ENCODE measurements at regions of chrX and their contacts with region 1.

Region 1: GRCh38 chrX:134423615-134424014 is 36.4 kb upstream of the HPRT1 start:
- DNase-seq: peak; percentile 49
- ATAC-seq: peak; percentile 29; the same call in 1 of the 2 replicates
- H3K4me3 ChIP-seq: no peak overlapping the region
- H3K27ac ChIP-seq: no peak overlapping the region
- H3K4me1 ChIP-seq: no peaks in the 10 kb centered on the region
- H3K27me3 ChIP-seq: no peaks in the 10 kb centered on the region
- CTCF ChIP-seq: peak; percentile 61

Region 2: GRCh38 chrX:134236626-134237614 is 186.7 kb before region 1 on chrX and contains the start of gene CCDC160:
- CTCF ChIA-PET with region 1: no interaction called
- POLR2A ChIA-PET with region 1: no interaction called
- intact Hi-C with region 1: no loop called
- DNase-seq: peak; percentile 51
- ATAC-seq: peak; percentile 72
- H3K4me3 ChIP-seq: peak within 1 kb of the TSS; percentile 74
- H3K27ac ChIP-seq: no peak within 1 kb of the TSS
- H3K4me1 ChIP-seq: peaks cover 26% of the 10 kb centered on the region
- H3K27me3 ChIP-seq: no peaks in the 10 kb centered on the region
- CTCF ChIP-seq: no peak
- total RNA-seq, gene CCDC160: 0.23 and 0.33 TPM in 2 replicates

Region 3: DNA sequence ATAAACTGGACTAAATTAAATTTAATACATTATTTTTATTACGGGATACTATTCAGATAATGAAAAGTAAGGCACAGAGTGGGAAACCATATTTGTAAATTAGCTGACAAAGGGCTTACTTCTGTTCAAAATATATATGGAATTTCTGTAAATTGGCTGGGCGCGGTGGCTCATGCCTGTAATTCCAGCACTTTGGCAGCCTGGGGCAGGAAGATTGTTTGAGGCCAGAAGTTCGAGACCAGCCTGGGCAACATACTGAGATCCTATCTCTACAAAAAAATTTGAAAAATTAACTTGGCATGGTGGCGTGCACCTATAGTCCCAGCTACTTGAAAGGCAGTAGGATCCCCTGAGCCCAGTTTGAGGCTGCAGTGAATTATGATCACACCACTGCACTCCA is 67.6 kb before region 1 on chrX:
- CTCF ChIA-PET with region 1: no interaction called
- POLR2A ChIA-PET with region 1: no interaction called
- intact Hi-C with region 1: no loop called
- DNase-seq: no peak
- ATAC-seq: no peak
- H3K4me3 ChIP-seq: no peak overlapping the region
- H3K27ac ChIP-seq: no peak overlapping the region
- H3K4me1 ChIP-seq: no peaks in the 10 kb centered on the region
- H3K27me3 ChIP-seq: no peaks in the 10 kb centered on the region
- CTCF ChIP-seq: no peak

Region 4: GRCh38 chrX:134460005-134460861 is 36.6 kb after region 1 on chrX and contains the start of gene HPRT1:
- CTCF ChIA-PET with region 1: no interaction called
- POLR2A ChIA-PET with region 1: no interaction called
- intact Hi-C with region 1: loop called (anchors 5 kb)
- DNase-seq: peak; percentile 78
- ATAC-seq: peak; percentile 91
- H3K4me3 ChIP-seq: peak within 1 kb of the TSS; percentile 75
- H3K27ac ChIP-seq: peak within 1 kb of the TSS; percentile 43
- H3K4me1 ChIP-seq: peaks cover 13% of the 10 kb centered on the region
- H3K27me3 ChIP-seq: no peaks in the 10 kb centered on the region
- CTCF ChIP-seq: no peak
- total RNA-seq, gene HPRT1: 27.5 and 44.1 TPM in 2 replicates

Measured in PC-3 (cell line).